Activated CD8-positive, alpha-beta T cell treated with anti-CD3 and anti-CD28 coated beads, Interleukin-2, amount 10 ng/mL, durations not matched to agents 7 days and 5 days (primary cell): ENCODE measurements at regions of chr11 and their contacts with region 1.

Region 1: DNA sequence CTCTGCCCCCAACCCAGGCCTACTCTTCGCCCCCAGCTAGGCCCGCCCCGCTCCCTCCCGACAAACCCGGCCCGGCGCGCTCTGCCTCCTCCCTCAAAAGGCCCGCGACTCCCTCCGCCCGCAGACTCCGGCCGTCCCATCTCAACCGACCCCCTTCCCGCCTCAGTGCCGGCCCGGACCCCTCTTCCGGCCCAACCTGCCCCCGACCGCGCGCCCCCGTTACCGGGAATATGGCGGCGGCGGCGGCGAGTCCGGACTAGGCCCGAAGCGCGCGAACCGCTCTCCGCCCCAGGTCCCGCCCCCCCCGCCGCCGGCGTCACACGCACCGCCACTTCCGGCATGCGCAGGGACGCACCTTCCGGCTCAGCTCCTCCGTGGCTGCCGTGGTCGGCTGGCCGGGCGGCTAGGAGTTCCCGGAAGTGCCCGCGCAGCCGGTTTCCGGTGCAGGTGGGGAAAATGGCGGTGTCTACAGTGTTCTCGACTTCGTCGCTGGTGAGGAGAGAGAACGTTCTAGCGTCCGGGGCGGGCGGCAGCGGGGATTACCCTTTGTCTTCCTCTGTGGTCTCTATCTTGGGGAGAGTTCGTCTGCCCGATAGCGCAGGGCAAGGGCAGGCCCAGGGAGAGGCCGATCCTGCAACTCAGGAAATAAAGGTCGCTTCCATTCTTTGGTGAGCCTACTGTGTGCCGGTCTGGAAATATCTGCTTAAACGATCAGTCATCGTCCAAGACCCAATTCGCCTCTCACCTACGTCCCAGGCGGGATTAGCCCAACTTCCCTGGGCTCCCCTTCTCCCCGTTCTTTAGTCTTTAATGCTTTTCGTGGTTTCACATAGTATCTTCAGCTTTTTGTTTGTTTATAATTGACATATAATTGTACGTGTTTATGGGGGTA is at the starts of genes CPSF7 and SDHAF2:
- DNase-seq: peak; percentile 98
- ATAC-seq: peak; percentile 93
- H3K4me3 Mint-ChIP-seq: peak within 1 kb of the TSS; percentile 99
- H3K27ac Mint-ChIP-seq: peak within 1 kb of the TSS; percentile 100
- H3K4me1 Mint-ChIP-seq: peaks cover 56% of the 10 kb centered on the region
- H3K27me3 Mint-ChIP-seq: no peaks in the 10 kb centered on the region
- total RNA-seq, gene CPSF7: 94.8 to 98.4 TPM
- total RNA-seq, gene SDHAF2: 51.6 to 54.3 TPM

Region 2: GRCh38 chr11:61361686-61362541 is 68.0 kb before region 1 on chr11 and contains the starts of genes CYB561A3 and TMEM138:
- CTCF ChIA-PET with region 1: interaction called, 7 read pairs
- POLR2A ChIA-PET with region 1: interaction called, 25 read pairs
- DNase-seq: peak; percentile 95
- ATAC-seq: peak; percentile 97
- H3K4me3 Mint-ChIP-seq: peak within 1 kb of the TSS; percentile 95
- H3K27ac Mint-ChIP-seq: peak within 1 kb of the TSS; percentile 94
- H3K4me1 Mint-ChIP-seq: peaks cover 37% of the 10 kb centered on the region
- H3K27me3 Mint-ChIP-seq: no peaks in the 10 kb centered on the region
- total RNA-seq, gene CYB561A3: 53.2 to 55.6 TPM
- total RNA-seq, gene TMEM138: 57.4 to 57.5 TPM

Region 3: GRCh38 chr11:61417670-61418069 is 12.3 kb before region 1 on chr11:
- CTCF ChIA-PET with region 1: interaction called, 15 read pairs
- POLR2A ChIA-PET with region 1: interaction called, 14 read pairs
- DNase-seq: no peak
- ATAC-seq: peak; percentile 35
- H3K4me3 Mint-ChIP-seq: no peak overlapping the region
- H3K27ac Mint-ChIP-seq: peak overlapping the region; percentile 35
- H3K4me1 Mint-ChIP-seq: peaks cover 58% of the 10 kb centered on the region
- H3K27me3 Mint-ChIP-seq: no peaks in the 10 kb centered on the region

Region 4: GRCh38 chr11:61567286-61568061 is 137.5 kb after region 1 on chr11:
- CTCF ChIA-PET with region 1: no interaction called
- POLR2A ChIA-PET with region 1: no interaction called
- DNase-seq: peak; percentile 88
- ATAC-seq: peak; percentile 89
- H3K4me3 Mint-ChIP-seq: no peak overlapping the region
- H3K27ac Mint-ChIP-seq: no peak overlapping the region
- H3K4me1 Mint-ChIP-seq: no peaks in the 10 kb centered on the region
- H3K27me3 Mint-ChIP-seq: peaks cover 13% of the 10 kb centered on the region